K562 (cell line): ENCODE measurements at regions of chr1 and their contacts with region 1.

Region 1: DNA sequence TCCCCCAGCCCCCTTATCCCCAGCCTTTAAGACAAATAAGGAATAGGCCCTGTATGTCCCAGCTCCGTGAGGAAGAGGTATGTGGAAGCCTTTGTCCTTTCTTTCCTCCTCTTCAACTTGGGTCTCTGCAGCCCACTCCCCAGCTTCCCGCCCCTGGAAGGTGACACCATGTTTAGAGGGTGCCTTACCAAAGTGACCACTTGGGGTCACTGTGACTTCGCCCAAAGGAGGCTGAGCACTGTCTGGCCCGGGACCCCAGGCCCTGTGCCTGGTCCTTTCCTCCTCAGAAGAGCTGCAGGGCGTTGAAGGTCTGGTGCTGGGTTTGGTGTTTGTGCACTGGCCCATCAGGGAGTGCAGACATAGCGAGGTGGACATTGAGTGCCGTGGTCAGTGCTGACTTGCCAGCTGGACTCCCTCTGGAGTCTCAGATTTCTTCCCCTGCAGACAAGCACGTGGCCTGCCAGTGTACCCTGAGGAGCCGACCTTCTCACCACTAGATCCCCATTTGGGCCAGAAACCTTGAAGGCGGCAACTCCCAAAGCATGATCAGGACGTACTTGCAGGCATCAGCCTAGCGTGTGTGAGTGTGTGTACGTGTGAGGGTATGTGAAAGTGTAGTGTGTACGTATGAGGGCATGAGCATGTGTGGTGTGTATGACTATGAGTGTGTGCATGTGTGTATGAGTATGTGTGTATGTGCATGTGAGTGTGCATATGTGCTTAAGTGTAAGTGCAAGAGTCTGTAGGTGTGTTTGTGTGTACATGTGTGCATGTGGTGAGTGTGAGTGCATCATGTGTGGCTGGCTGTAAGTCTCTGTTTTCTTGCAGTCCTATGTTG is 181.4 kb upstream of the KIAA0040 start:
- DNase-seq: peak; percentile 66 to 81 (median 76)
- ATAC-seq: peak; percentile 96
- H3K4me3 ChIP-seq: no peak overlapping the region
- H3K27ac ChIP-seq: no peak overlapping the region
- H3K4me1 ChIP-seq: no peaks in the 10 kb centered on the region
- H3K27me3 ChIP-seq: peaks cover 6 to 13% of the 10 kb centered on the region in 2 experiments
- CTCF ChIP-seq: peak; percentile 76 to 92 (median 83)
- EP300 ChIP-seq: no peak
- POLR2A ChIP-seq: no peak
- RAD21 ChIP-seq: peak; percentile 85 to 87

Region 2: GRCh38 chr1:175434283-175434860 is 60.4 kb after region 1 on chr1:
- CTCF ChIA-PET with region 1: no interaction called
- POLR2A ChIA-PET with region 1: no interaction called
- in situ Hi-C with region 1: no loop called
- intact Hi-C with region 1: loop called (anchors 1 kb)
- DNase-seq: peak; percentile 70 to 80 (median 73)
- ATAC-seq: peak; percentile 97
- H3K4me3 ChIP-seq: no peak overlapping the region
- H3K27ac ChIP-seq: no peak overlapping the region
- H3K4me1 ChIP-seq: no peaks in the 10 kb centered on the region
- H3K27me3 ChIP-seq: 0 out of 5 replicates have a peak, but pooled peaks cover 0 to 4% of the 10 kb centered on the region in 2 experiments
- CTCF ChIP-seq: peak; percentile 86 to 97 (median 89)
- EP300 ChIP-seq: no peak
- POLR2A ChIP-seq: no peak
- RAD21 ChIP-seq: peak; percentile 71 to 75

Region 3: DNA sequence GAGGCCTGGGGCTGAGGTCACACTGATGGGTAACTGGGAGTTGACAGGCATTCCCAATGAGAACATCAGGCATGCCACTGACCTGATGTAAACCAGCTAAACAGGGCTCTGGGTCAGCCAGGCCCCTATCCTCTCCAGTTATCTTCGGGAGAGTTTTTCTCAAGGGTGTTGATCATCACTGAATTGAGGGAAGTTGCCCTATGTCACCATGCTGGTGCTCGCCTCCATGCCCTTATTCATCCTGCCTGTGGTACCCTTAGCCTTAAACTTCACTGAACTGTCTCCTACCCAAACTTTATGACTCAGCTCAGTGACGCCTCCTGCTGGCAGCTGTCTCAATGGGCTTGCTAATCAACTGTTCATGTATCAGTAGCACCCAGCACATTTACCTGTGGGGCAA is 450.1 kb after region 1 on chr1:
- CTCF ChIA-PET with region 1: no interaction called
- POLR2A ChIA-PET with region 1: no interaction called
- in situ Hi-C with region 1: no loop called
- intact Hi-C with region 1: loop called (anchors 5 kb)
- DNase-seq: peak; percentile 21 to 58 (median 28)
- ATAC-seq: peak; percentile 78
- H3K4me3 ChIP-seq: no peak overlapping the region
- H3K27ac ChIP-seq: no peak overlapping the region
- H3K4me1 ChIP-seq: no peaks in the 10 kb centered on the region
- H3K27me3 ChIP-seq: no peaks in the 10 kb centered on the region
- CTCF ChIP-seq: peak; percentile 68 to 73 (median 70)
- EP300 ChIP-seq: no peak
- POLR2A ChIP-seq: no peak
- RAD21 ChIP-seq: peak in 1 of 2 experiments; percentile 57; a peak in 3 of 4 replicates

Region 4: DNA sequence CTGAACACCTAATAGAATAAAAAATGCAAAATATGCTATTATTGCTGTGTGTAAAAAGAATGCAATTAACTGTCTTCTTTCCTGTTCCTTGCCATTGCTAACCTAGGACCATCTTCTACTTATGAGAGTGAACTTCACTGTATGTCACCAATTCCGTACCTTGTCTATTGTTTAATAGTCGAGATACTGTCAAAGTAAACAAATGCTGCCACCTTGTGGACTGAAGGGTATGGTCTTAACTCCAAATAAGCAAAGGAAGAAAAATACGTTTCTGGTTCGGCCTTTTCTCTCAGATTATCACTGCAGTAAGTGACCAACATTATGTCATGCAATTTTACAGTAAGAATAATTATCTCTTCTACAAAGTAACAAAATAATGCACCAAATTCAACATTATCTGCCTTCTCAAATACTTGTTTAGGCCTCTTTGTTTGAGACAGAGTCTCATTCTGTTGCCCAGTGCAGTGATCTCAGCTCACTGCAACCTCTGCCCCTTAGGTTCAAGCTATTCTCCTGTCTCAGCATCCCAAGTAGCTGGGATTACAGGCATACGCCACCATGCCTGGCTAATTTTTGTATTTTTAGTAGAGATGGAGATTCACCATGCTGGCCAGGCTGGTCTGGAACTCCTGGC is 699.6 kb after region 1 on chr1:
- CTCF ChIA-PET with region 1: interaction called, 12 read pairs
- POLR2A ChIA-PET with region 1: no interaction called
- in situ Hi-C with region 1: loop called (anchors 10 kb)
- intact Hi-C with region 1: loop called (anchors 2 kb)
- DNase-seq: peak; percentile 52 to 79 (median 55)
- ATAC-seq: peak; percentile 98
- H3K4me3 ChIP-seq: no peak overlapping the region
- H3K27ac ChIP-seq: no peak overlapping the region
- H3K4me1 ChIP-seq: no peaks in the 10 kb centered on the region
- H3K27me3 ChIP-seq: no peaks in the 10 kb centered on the region
- CTCF ChIP-seq: peak; percentile 51 to 78 (median 72); a peak in 5 of 6 replicates
- EP300 ChIP-seq: no peak
- POLR2A ChIP-seq: no peak
- RAD21 ChIP-seq: peak; percentile 69 to 84